ENCODE measurements at regions of chr12 and their contacts with region 1.

Region 1: GRCh38 chr12:48165094-48165981 is 8.0 kb upstream of the ASB8 start:
- DNase-seq: peak; percentile 27
- H3K4me3 ChIP-seq: no peak overlapping the region
- H3K27ac ChIP-seq: no peak overlapping the region
- H3K4me1 ChIP-seq: no peaks in the 10 kb centered on the region
- H3K27me3 ChIP-seq: no peaks in the 10 kb centered on the region
- CTCF ChIP-seq: peak; percentile 95 to 98

Region 2: GRCh38 chr12:47715393-47715876 is 449.9 kb before region 1 on chr12:
- CTCF ChIA-PET with region 1: no interaction called
- dilution Hi-C with region 1: no loop called
- in situ Hi-C with region 1: loop called in 1 of 2 experiments (anchors 25 kb)
- intact Hi-C with region 1: loop called (anchors 1 kb)
- DNase-seq: peak; percentile 77
- H3K4me3 ChIP-seq: peak overlapping the region in 1 of 3 experiments; percentile 9
- H3K27ac ChIP-seq: no peak overlapping the region
- H3K4me1 ChIP-seq: peaks cover 7% of the 10 kb centered on the region
- H3K27me3 ChIP-seq: no peaks in the 10 kb centered on the region
- CTCF ChIP-seq: peak; percentile 79 to 80

Region 3: GRCh38 chr12:47863467-47863866 is 301.9 kb before region 1 on chr12:
- CTCF ChIA-PET with region 1: no interaction called
- dilution Hi-C with region 1: no loop called
- in situ Hi-C with region 1: loop called in 1 of 2 experiments (anchors 25 kb)
- intact Hi-C with region 1: loop called (anchors 5 kb)
- DNase-seq: peak; percentile 91
- H3K4me3 ChIP-seq: no peak overlapping the region
- H3K27ac ChIP-seq: peak overlapping the region; percentile 76
- H3K4me1 ChIP-seq: peaks cover 46% of the 10 kb centered on the region
- H3K27me3 ChIP-seq: no peaks in the 10 kb centered on the region
- CTCF ChIP-seq: no peak

Region 4: GRCh38 chr12:47949441-47950308 is 215.7 kb before region 1 on chr12:
- CTCF ChIA-PET with region 1: no interaction called
- dilution Hi-C with region 1: loop called (anchors 25 kb)
- in situ Hi-C with region 1: no loop called
- intact Hi-C with region 1: loop called (anchors 5 kb)
- DNase-seq: peak; percentile 78
- H3K4me3 ChIP-seq: no peak overlapping the region
- H3K27ac ChIP-seq: peak overlapping the region; percentile 78
- H3K4me1 ChIP-seq: peaks cover 84% of the 10 kb centered on the region
- H3K27me3 ChIP-seq: no peaks in the 10 kb centered on the region
- CTCF ChIP-seq: peak; percentile 81 to 96

Region 5: GRCh38 chr12:48084066-48084465 is 81.3 kb before region 1 on chr12:
- CTCF ChIA-PET with region 1: no interaction called
- dilution Hi-C with region 1: no loop called
- in situ Hi-C with region 1: no loop called
- intact Hi-C with region 1: loop called (anchors 1 kb)
- DNase-seq: no peak
- H3K4me3 ChIP-seq: no peak overlapping the region
- H3K27ac ChIP-seq: no peak overlapping the region
- H3K4me1 ChIP-seq: peaks cover 3% of the 10 kb centered on the region
- H3K27me3 ChIP-seq: no peaks in the 10 kb centered on the region
- CTCF ChIP-seq: peak in 1 of 2 donors; percentile 20

Measured in mammary epithelial cell (primary cell).